ENCODE measurements at regions of chr15 and their contacts with region 1.

Region 1: DNA sequence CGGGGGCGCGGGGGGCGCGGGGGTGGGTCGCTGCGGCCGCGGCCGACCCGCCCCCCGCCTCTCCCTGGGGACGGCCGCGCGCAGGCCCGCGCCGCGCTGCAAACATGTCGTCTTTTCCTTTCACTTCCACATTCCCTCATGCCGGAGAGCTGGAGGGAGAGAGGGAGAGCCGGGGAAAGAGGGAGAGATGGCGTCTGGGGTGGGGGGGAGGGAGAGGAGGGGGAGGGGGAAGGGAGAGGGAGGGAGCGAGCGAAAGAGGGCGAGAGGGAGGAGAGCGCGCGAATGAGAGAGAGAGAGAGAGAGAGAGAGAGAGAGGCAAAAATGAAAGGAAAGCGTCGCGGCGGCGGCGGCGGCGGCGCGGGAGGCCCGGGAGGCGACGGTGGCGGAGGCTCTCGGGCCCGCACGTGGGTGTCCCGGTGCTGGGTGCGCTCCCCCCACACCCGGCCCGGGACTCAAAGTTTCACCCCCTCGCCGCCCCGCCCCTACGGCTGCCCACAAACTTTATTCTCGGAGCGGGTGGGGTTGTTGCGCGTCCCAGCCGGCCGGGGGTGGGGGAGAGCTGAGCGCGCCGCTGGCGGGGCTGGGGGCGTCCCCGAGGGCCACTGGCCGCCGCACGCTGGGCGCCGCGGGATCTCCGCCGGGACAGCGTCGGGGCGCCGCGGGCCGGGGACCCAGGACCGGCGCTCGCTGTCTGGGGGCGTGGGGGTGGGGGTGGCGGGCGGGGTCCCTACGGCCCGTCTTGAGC is 731 bp downstream of the ZNF710 start:
- DNase-seq: peak; percentile 83
- H3K4me3 ChIP-seq: peak overlapping the region; percentile 72 to 96 (median 78)
- H3K27ac ChIP-seq: peak overlapping the region; percentile 85 to 94 (median 91)
- H3K4me1 ChIP-seq: peaks cover 0 to 57% (median 52%) of the 10 kb centered on the region in 4 donors
- H3K27me3 ChIP-seq: no peaks in the 10 kb centered on the region
- CTCF ChIP-seq: no peak
- EP300 ChIP-seq: no peak
- POLR2A ChIP-seq: no peak

Region 2: DNA sequence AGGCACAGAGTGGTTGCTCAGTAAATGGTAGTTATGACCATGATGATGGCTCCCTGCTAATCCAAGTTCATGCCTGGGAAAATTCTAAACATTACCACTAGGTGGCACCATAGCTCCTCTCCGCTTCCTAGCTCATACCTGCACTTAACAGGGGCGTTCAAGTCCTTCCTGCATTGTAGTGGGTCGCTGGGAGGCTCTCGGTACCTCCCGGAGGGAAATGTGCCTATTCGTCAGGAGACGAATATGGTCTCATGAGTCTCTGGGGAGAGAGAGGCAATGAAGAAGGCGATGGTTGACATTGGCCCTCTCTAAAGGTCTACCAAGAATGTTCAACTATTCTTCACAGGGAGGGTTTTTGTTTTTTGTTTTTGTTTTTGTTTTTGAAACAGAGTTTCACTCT is 261.7 kb before region 1 on chr15:
- intact Hi-C with region 1: loop called (anchors 10 kb)
- DNase-seq: peak; percentile 74
- H3K4me3 ChIP-seq: no peak overlapping the region
- H3K27ac ChIP-seq: no peak overlapping the region
- H3K4me1 ChIP-seq: peaks cover 0 to 3% (median 0%) of the 10 kb centered on the region in 4 donors
- H3K27me3 ChIP-seq: peaks cover 0 to 2% (median 0%) of the 10 kb centered on the region in 3 donors
- CTCF ChIP-seq: peak; percentile 74 to 93 (median 90)
- EP300 ChIP-seq: no peak
- POLR2A ChIP-seq: no peak

Region 3: DNA sequence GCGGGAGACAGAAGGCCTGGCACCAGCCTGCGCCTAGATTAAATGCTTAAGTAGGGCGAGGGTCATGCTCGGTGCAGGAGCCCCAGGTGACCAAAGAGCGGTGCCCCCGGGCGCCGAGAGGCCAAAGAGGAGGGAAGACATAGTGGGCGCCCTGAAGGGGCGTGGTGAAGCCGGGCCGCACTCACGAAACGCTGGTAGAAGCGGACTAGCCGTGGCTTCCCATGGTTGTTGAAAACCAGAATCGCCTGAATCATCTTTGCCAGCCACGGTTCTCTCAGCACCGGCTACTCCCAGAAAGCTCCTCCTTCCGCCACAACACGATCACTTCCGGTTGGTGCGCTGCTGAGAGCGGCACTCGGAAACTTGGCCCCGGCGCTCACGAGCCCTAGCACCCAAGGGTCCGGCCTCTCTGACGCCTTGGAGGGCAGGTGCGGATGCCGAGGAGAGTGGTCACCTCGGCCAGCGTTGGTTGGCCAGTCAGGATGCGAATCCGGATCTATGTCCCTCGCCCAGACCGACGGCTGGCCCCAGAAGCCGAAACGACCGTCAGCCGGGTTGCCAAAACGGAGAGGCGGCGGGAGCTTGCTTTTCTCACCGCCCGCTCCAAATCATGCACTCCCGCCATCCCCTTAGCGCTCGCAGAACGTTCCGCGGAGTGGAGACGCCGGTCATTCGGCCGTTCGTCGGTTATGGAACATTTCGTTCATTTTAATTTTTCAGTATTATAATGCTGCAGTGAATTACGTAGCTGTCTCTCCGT is 108.0 kb before region 1 on chr15 and contains the start of gene AP3S2:
- intact Hi-C with region 1: loop called (anchors 2 kb)
- DNase-seq: peak; percentile 96
- H3K4me3 ChIP-seq: peak within 1 kb of the TSS; percentile 79 to 91 (median 80)
- H3K27ac ChIP-seq: peak within 1 kb of the TSS; percentile 86 to 93 (median 90)
- H3K4me1 ChIP-seq: peaks cover 0 to 20% (median 15%) of the 10 kb centered on the region in 4 donors
- H3K27me3 ChIP-seq: no peaks in the 10 kb centered on the region
- CTCF ChIP-seq: no peak
- EP300 ChIP-seq: no peak
- POLR2A ChIP-seq: peak; percentile 22
- total RNA-seq, gene AP3S2: 24.1 to 37.8 (median 26.6) TPM

Region 4: DNA sequence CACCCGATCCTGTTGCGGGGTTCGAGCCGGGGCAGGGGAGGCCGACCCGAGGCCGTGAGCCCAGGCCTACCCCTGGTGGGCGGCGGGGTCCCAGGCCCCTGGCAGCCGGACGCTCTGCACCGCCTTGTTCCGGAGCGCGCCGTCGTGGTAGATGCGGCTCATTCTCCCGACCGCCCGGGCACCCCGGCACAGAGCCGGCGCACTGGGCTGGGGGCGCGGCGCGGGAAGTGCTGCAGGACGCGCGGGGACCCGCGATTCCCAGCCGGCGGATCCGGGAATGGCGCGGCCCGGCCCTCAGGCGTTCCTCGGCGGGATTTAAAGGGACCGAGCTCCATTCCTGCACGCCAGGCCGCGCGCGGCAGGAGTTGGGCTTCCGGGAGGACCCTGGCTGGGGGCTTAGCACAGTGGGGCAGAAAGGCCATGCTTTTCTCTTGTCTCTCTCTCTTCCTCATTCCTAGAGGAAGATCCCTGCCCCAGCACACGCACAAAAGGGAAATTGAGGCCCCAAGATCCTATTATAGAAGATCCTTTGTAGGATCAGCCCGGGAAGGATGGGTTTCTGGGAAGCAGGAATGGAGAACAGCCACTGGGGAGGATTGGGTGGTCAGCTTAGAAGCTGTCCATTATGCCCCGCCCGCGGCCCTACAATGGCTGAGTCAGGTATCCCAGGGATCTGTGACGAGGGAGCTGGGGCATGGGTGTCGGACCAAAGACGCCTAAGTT is 89.0 kb before region 1 on chr15 and contains the start of gene ARPIN:
- intact Hi-C with region 1: loop called (anchors 5 kb)
- DNase-seq: peak; percentile 82
- H3K4me3 ChIP-seq: peak within 1 kb of the TSS; percentile 77 to 96 (median 86)
- H3K27ac ChIP-seq: peak within 1 kb of the TSS; percentile 78 to 92 (median 89)
- H3K4me1 ChIP-seq: peaks cover 0 to 26% (median 17%) of the 10 kb centered on the region in 4 donors
- H3K27me3 ChIP-seq: no peaks in the 10 kb centered on the region
- CTCF ChIP-seq: peak in 2 of 4 experiments; percentile 8 to 9
- EP300 ChIP-seq: no peak
- POLR2A ChIP-seq: no peak
- total RNA-seq, gene ARPIN: 17.9 to 33.5 (median 22.9) TPM

Region 5: GRCh38 chr15:90071208-90071807 is 69.5 kb after region 1 on chr15:
- intact Hi-C with region 1: loop called (anchors 2 kb)
- DNase-seq: peak; percentile 90
- H3K4me3 ChIP-seq: no peak overlapping the region
- H3K27ac ChIP-seq: peak overlapping the region; percentile 24 to 58 (median 55)
- H3K4me1 ChIP-seq: peaks cover 0 to 18% (median 17%) of the 10 kb centered on the region in 4 donors
- H3K27me3 ChIP-seq: no peaks in the 10 kb centered on the region
- CTCF ChIP-seq: peak; percentile 64 to 84 (median 74)
- EP300 ChIP-seq: no peak
- POLR2A ChIP-seq: no peak

Region 6: GRCh38 chr15:90221246-90221900 is 219.5 kb after region 1 on chr15:
- intact Hi-C with region 1: loop called (anchors 10 kb)
- DNase-seq: peak; percentile 93
- H3K4me3 ChIP-seq: no peak overlapping the region
- H3K27ac ChIP-seq: peak overlapping the region; percentile 53 to 82 (median 79)
- H3K4me1 ChIP-seq: peaks cover 0 to 33% (median 16%) of the 10 kb centered on the region in 4 donors
- H3K27me3 ChIP-seq: no peaks in the 10 kb centered on the region
- CTCF ChIP-seq: peak; percentile 79 to 85 (median 82)
- EP300 ChIP-seq: no peak
- POLR2A ChIP-seq: no peak